ENCODE measurements at regions of chr12 and their contacts with region 1.

Region 1: DNA sequence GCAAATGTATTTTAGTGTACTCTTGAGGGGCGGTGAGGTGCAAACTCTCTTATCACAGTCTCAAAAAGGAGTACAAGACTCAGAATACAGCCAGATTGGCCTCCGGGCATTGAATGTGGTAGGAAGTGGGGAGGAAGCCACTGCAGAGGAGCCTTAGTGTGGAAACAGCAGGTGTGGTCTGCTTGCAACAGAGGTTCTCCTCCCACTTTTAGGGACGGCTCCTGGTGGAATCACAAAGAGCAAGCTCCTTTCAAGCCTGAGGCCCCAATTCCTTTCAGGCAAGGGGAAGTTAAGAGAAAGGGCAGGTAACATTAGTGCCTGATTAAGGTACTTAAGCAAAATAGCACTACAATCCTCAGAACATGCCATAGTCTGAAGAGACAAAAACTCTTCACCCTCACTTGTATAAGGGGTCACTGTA is 23.7 kb upstream of the SLC2A3 start:
- DNase-seq: peak; percentile 78
- ATAC-seq: peak; percentile 72
- H3K4me3 Mint-ChIP-seq: peak overlapping the region; percentile 85
- H3K27ac Mint-ChIP-seq: peak overlapping the region; percentile 91
- H3K4me1 Mint-ChIP-seq: peaks cover 42% of the 10 kb centered on the region
- H3K27me3 Mint-ChIP-seq: no peaks in the 10 kb centered on the region

Region 2: DNA sequence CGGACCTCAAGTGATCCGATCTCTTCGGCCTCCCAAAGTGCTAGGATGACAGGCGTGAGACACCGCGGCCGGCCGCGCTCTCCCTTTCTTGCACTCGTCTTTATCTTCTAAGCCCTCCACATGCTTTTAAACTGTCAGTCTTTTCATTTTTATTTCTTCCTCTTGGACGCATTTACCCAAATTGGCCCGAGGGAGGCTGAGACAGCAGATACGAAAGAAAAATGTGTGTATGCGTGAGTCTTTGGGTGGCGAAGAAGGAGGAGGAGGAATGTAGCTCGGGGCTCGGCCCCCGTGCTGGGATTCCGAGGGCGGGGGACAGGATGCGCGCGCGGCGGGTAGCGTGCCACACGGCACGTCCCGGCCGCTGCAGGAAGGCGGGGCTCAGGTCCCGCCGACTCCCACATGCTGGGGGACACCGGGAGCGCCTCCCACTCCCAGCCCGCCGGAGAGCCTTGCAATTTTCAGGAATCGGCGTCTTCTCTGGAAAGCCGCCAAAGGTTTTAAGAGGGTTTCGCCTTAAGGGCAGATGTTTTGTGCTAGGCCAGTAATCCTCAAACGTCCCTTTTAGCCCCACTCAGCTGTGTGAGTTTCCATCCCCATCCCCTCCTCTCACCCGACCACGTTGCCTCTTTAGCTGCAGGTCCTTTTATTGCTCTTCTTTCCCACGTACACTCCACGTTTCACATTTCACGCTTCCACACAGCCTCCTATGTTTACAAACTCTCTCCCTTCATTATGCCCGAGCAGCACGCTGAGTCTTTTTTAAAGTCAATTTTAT is 11.0 kb after region 1 on chr12:
- CTCF ChIA-PET with region 1: interaction called, 23 read pairs
- POLR2A ChIA-PET with region 1: interaction called, 34 read pairs
- DNase-seq: peak; percentile 91
- ATAC-seq: peak; percentile 96
- H3K4me3 Mint-ChIP-seq: peak overlapping the region; percentile 74
- H3K27ac Mint-ChIP-seq: peak overlapping the region; percentile 95
- H3K4me1 Mint-ChIP-seq: peaks cover 42% of the 10 kb centered on the region
- H3K27me3 Mint-ChIP-seq: no peaks in the 10 kb centered on the region

Region 3: GRCh38 chr12:7989827-7990551 is 30.3 kb after region 1 on chr12:
- CTCF ChIA-PET with region 1: interaction called, 33 read pairs
- POLR2A ChIA-PET with region 1: interaction called, 14 read pairs
- DNase-seq: peak; percentile 83
- ATAC-seq: peak; percentile 90
- H3K4me3 Mint-ChIP-seq: peak overlapping the region; percentile 59
- H3K27ac Mint-ChIP-seq: peak overlapping the region; percentile 89
- H3K4me1 Mint-ChIP-seq: peaks cover 34% of the 10 kb centered on the region
- H3K27me3 Mint-ChIP-seq: no peaks in the 10 kb centered on the region

Region 4: GRCh38 chr12:7995266-7995963 is 35.7 kb after region 1 on chr12:
- CTCF ChIA-PET with region 1: interaction called, 33 read pairs
- POLR2A ChIA-PET with region 1: interaction called, 14 read pairs
- DNase-seq: peak; percentile 89
- ATAC-seq: peak; percentile 100
- H3K4me3 Mint-ChIP-seq: no peak overlapping the region
- H3K27ac Mint-ChIP-seq: no peak overlapping the region
- H3K4me1 Mint-ChIP-seq: peaks cover 15% of the 10 kb centered on the region
- H3K27me3 Mint-ChIP-seq: no peaks in the 10 kb centered on the region